CD4-positive, alpha-beta T cell (primary cell): ENCODE measurements at regions of chr1 and their contacts with region 1.

Region 1: GRCh38 chr1:975896-976683 is 5.8 kb downstream of the PERM1 start:
- DNase-seq: peak in 13 of 14 experiments; percentile 41 to 84 (median 68)
- ATAC-seq: peak; percentile 97
- H3K4me3 ChIP-seq: no peak overlapping the region
- H3K4me3 Mint-ChIP-seq: no peak overlapping the region
- H3K27ac ChIP-seq: no peak overlapping the region
- H3K27ac Mint-ChIP-seq: no peak overlapping the region
- H3K4me1 ChIP-seq: peaks cover 11% of the 10 kb centered on the region
- H3K4me1 Mint-ChIP-seq: peaks cover 7% of the 10 kb centered on the region
- H3K27me3 ChIP-seq: peaks cover 12 to 22% of the 10 kb centered on the region in 2 experiments
- H3K27me3 Mint-ChIP-seq: peaks cover 16% of the 10 kb centered on the region
- CTCF ChIP-seq: peak; percentile 89

Region 2: GRCh38 chr1:869499-870244 is 106.4 kb before region 1 on chr1:
- CTCF ChIA-PET with region 1: interaction called, 4 read pairs
- POLR2A ChIA-PET with region 1: interaction called, 3 read pairs
- intact Hi-C with region 1: loop called in 1 of 2 experiments (anchors 1 kb)
- DNase-seq: peak; percentile 72 to 93 (median 83)
- ATAC-seq: peak; percentile 99
- H3K4me3 ChIP-seq: no peak overlapping the region
- H3K4me3 Mint-ChIP-seq: no peak overlapping the region
- H3K27ac ChIP-seq: no peak overlapping the region
- H3K27ac Mint-ChIP-seq: no peak overlapping the region
- H3K4me1 ChIP-seq: peaks cover 3% of the 10 kb centered on the region
- H3K4me1 Mint-ChIP-seq: no peaks in the 10 kb centered on the region
- H3K27me3 ChIP-seq: no peaks in the 10 kb centered on the region
- H3K27me3 Mint-ChIP-seq: peaks cover 12% of the 10 kb centered on the region
- CTCF ChIP-seq: peak; percentile 75

Region 3: DNA sequence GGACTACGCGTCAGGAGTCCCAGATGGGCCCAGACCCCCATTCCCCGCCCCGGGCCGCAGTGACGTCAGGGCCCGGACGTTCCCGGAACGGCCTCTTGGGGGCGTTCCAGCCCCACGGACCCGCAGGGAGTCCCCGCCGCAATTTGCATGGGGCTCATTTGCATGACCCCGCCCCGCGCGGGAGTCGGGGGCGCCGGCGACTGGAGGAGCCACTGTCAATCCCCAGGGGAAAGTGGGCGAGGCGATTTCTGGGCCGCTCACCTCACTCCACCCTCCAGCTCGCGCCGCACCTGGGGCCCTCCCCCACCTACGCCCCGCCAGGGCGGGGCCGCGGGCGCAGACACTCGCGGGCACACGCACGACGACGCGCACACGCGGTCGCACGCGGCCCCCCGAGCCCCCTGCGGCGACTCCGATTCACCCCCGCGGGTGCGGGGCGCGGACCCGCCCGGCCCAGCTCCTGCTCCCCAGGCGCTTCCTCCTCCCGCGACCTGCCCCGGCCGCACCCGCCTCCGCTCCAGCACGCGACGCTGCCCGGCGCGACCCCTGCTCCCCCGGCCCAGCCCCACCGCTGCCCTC is 57.0 kb after region 1 on chr1:
- CTCF ChIA-PET with region 1: no interaction called
- POLR2A ChIA-PET with region 1: no interaction called
- intact Hi-C with region 1: no loop called
- DNase-seq: peak; percentile 65 to 92 (median 75)
- ATAC-seq: peak; percentile 89
- H3K4me3 ChIP-seq: peak overlapping the region; percentile 40
- H3K4me3 Mint-ChIP-seq: peak overlapping the region; percentile 69
- H3K27ac ChIP-seq: no peak overlapping the region
- H3K27ac Mint-ChIP-seq: no peak overlapping the region
- H3K4me1 ChIP-seq: peaks cover 21% of the 10 kb centered on the region
- H3K4me1 Mint-ChIP-seq: peaks cover 4% of the 10 kb centered on the region
- H3K27me3 ChIP-seq: peaks cover 37 to 40% of the 10 kb centered on the region in 2 experiments
- H3K27me3 Mint-ChIP-seq: peaks cover 35% of the 10 kb centered on the region
- CTCF ChIP-seq: peak; percentile 73